ENCODE measurements at regions of chr16 and their contacts with region 1.

Region 1: GRCh38 chr16:14364386-14365204 is 265.5 kb downstream of the PARN start:
- DNase-seq: no peak

Region 2: DNA sequence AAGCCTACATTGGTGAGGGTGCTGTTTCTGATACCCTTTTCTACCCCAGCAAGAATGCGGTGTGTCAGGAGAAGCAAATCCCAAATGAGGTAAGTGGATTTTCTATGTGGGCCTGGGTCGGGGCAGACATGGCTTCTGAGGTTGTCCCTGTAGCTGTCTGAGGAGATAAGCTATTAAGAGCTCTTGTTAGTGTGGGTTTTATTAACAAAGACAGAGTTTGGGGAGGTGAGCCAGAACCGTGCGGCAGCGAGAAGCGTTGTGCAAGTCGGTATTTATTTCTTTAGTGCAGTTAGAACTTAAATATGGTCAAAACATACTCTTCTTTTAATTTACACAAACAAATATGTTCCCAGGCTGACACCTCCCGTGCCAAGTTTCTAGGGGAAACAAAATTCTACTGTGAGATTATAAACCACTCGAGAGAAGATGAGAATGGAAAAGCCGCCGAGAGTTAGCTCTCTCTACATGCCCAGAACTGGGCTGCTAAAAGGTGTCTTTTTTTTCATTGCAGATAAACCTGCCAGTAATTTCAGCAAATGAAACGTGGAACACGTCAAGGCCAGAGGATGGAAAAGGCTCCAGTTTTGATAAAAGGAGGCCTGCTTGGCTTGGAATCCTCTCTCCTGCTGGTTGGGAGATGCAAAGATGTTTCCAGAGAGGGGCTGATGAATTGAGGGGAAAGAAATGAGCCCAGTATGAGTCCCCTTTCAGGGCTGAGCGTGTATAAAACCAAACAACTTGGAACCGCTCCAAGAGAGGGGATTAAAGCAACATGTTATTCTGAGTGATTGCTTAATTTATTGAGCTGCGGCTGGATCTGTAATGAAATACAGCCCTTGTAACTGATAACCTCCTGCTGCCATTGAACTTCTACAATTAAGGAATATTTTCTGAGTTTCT is 38.8 kb before region 1 on chr16:
- intact Hi-C with region 1: loop called in 1 of 2 experiments (anchors 2 kb)
- DNase-seq: no peak

Region 3: GRCh38 chr16:14345512-14346115 is 19.0 kb before region 1 on chr16:
- intact Hi-C with region 1: loop called in 1 of 2 experiments (anchors 1 kb)
- DNase-seq: no peak

Region 4: DNA sequence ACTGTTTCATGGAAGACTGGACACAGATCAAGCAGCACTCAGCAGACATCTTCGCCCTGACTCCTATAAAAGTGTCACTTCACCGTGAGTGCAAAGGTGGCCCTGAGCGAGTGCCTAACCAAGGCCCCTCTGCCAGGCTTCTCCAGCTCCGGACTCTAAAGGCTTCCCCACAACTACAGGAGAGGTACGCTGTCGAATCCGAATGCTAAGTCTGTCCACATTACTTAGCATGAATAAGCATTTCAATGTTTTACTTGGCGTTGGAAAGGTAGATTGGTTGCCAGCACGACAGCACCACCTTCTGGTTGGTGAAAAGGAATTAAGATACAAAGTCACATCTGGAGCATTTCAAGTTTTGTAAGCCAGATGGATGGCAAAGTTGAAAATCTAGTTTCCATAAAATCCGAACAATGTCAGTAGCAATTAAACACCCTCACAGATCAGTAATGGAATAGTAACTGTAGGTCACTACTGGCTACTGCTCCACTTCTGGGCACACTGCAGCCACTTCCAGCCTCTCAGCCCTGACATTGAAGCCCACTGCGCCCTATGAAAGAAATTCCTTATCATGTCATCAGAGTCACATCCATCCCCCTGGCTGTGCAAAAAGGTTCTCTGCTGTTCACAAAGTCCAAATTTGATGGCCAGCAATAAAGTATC is 164.5 kb after region 1 on chr16:
- intact Hi-C with region 1: no loop called
- DNase-seq: peak; percentile 86

Measured in posterior vena cava (tissue), 2 donors.